Activated CD4-positive, alpha-beta T cell treated with anti-CD3 and anti-CD28 coated beads, Interleukin-2, amount 10 ng/mL, durations not matched to agents 24 days and 14 days (primary cell): ENCODE measurements at regions of chr19 and their contacts with region 1.

Region 1: GRCh38 chr19:53792721-53793433 is 31.2 kb downstream of the NLRP12 start:
- DNase-seq: peak; percentile 93
- H3K4me3 Mint-ChIP-seq: no peak overlapping the region
- H3K27ac Mint-ChIP-seq: no peak overlapping the region
- H3K4me1 Mint-ChIP-seq: no peaks in the 10 kb centered on the region
- H3K27me3 Mint-ChIP-seq: no peaks in the 10 kb centered on the region

Region 2: DNA sequence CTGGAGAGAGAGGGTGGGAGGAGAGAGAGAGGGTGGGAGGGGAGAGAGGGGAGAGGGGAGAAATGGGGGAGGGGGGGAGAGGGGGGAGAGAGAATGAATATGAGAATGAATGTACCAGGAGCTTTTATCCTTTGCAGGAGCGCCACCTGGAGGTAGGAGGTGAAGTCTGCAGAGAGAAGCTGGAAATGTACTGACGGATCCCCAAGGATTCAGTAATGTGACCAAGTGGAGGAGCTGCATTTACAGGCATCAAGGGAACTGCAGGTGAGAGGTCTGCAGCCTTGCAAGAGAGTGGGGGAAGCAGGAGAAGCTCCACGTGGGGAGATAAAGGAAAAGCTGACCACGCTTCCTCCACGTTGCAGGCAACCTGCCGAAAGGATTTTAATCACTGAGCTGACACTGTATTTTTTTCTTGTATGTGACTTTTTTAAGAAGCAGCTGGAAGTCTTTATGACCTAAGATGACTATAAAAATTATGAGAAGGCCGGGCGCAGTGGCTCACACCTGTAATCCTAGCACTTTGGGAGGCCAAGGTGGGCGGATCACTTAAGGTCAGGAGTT is 237.1 kb after region 1 on chr19:
- intact Hi-C with region 1: loop called (anchors 1 kb)
- DNase-seq: peak; percentile 86
- H3K4me3 Mint-ChIP-seq: no peak overlapping the region
- H3K27ac Mint-ChIP-seq: no peak overlapping the region
- H3K4me1 Mint-ChIP-seq: peaks cover 5% of the 10 kb centered on the region
- H3K27me3 Mint-ChIP-seq: peaks cover 8% of the 10 kb centered on the region